ENCODE measurements at regions of chr5 and their contacts with region 1.

Region 1: GRCh38 chr5:131263648-131264450 is at the start of gene CDC42SE2:
- DNase-seq: peak; percentile 94
- ATAC-seq: peak; percentile 100
- total RNA-seq, gene CDC42SE2: 11.6 TPM

Region 2: GRCh38 chr5:129422946-129423345 is 1840.9 kb before region 1 on chr5:
- intact Hi-C with region 1: no loop called
- DNase-seq: no peak
- ATAC-seq: no peak

Region 3: DNA sequence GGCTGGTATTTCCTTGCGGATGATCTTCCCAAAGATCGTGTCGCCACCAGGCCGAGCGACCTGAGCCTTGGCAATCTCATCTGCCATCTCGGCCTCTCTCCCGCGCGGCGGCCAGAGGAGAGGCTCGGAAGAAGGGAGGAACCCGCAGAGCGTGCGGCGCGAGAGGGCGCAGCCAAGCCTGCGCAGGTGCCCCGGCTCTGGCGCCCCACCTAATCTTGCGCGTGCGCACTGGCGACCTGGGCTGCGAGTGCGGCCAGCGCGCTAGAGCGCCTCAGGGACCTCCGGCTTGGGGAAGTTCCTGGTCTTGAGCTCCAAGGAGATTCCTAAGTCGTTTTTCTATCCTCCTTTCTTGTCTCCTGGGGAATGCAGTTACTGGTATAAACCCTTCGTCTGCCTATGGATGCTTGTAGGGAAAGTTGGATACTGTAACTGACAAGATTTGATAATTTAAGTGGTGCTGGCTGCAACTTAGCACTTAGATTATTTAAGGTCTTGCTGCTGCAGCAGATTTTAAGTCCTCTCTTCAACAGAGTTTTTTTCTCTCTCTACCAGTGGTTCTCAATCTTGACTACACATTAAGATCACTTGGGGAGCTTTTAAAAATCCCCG is 98.6 kb before region 1 on chr5 and contains the start of gene HINT1:
- intact Hi-C with region 1: loop called (anchors 1 kb)
- DNase-seq: peak; percentile 97
- ATAC-seq: peak; percentile 97
- total RNA-seq, gene HINT1: 200 TPM

Region 4: GRCh38 chr5:131382407-131383395 is 118.9 kb after region 1 on chr5:
- intact Hi-C with region 1: loop called (anchors 10 kb)
- DNase-seq: no peak
- ATAC-seq: peak; percentile 39

Region 5: DNA sequence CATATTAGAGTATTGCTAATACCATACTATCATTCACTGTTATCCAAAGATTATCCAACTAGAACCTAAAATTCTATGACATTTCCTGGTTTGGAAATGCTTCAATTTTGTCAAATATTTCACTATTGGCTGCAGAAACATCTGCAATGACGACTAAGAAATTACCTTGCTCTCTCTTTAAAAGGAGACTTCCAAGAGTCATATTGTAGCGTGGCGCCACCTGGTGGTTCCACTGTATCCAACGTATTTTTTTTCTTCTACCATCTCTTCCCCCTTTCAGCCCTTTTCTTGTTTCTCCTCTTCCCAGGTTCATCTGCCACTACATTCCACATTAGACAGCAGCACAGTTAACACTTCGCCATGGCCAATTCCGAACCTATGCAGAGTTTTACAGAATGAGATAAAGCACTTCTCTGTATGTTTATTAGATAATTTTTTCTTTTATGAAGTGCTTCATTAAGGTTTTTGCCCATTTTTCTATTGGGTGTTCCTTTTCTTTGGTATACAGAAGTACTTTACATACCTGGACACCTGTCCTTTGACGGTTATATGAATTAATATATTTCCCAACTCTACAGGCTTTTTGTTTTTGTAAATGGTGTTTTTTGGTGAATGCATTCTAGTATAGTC is 153.5 kb after region 1 on chr5:
- intact Hi-C with region 1: loop called (anchors 5 kb)
- DNase-seq: peak; percentile 79
- ATAC-seq: no peak